SK-N-SH (cell line): ENCODE measurements at regions of chr9 and their contacts with region 1.

Region 1: GRCh38 chr9:133149126-133150107 is 14.3 kb downstream of the GBGT1 start:
- DNase-seq: peak; percentile 98
- H3K4me3 ChIP-seq: peak overlapping the region in 1 of 2 experiments; percentile 81; a peak in 2 of 4 replicates
- H3K27ac ChIP-seq: peak overlapping the region; percentile 35 to 80
- H3K4me1 ChIP-seq: peaks cover 0 to 24% of the 10 kb centered on the region in 2 experiments; a peak in 2 of 4 replicates
- H3K27me3 ChIP-seq: no peaks in the 10 kb centered on the region
- CTCF ChIP-seq: peak; percentile 43
- EP300 ChIP-seq: no peak
- RAD21 ChIP-seq: peak; percentile 41; the same call in 1 of the 2 replicates

Region 2: DNA sequence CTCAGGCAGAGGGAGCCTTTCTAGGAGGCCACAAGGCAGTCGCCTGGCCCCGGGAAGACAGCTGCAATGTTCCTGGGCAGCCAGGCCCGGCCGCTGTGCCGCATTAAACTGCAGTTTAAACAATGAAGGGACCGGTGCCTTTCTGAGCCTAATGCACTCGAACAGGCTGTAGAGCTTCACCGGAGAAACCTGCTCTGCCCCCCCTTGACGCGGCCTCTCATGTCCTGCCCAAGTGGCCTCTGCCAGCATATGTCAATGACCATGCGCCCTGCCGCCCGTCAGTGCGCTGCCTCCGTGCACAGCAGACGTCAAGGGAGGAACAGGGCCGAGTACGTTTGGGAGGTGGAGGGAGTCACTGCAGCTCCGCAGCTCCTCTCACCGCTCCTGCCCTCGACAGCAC is 605.5 kb before region 1 on chr9:
- CTCF ChIA-PET with region 1: no interaction called
- POLR2A ChIA-PET with region 1: no interaction called
- DNase-seq: no peak
- H3K4me3 ChIP-seq: no peak overlapping the region
- H3K27ac ChIP-seq: no peak overlapping the region
- H3K4me1 ChIP-seq: peaks cover 0 to 49% of the 10 kb centered on the region in 2 experiments; a peak in 1 of 4 replicates
- H3K27me3 ChIP-seq: no peaks in the 10 kb centered on the region
- CTCF ChIP-seq: no peak
- EP300 ChIP-seq: no peak
- RAD21 ChIP-seq: no peak

Region 3: DNA sequence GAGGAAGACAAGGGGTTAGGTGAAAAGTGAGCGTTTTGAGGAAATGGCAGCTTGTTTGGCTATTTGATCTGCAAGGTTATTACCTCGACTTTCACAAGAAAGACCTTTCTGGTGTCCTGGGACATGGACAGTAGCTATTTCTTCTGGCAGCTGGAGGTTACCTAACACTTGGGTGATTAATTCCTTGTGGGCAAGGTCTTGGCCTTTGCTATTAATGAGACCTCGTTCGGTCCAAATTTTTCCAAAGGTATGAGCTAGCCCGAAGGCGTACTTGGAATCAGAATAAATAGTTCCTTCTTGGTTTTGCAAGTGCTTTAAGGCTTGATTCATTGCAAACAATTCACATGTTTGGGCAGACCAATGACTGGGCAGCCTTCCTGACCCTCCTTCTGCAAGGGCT is 113.7 kb before region 1 on chr9:
- CTCF ChIA-PET with region 1: interaction called, 216 read pairs
- POLR2A ChIA-PET with region 1: interaction called, 10 read pairs
- DNase-seq: no peak
- H3K4me3 ChIP-seq: no peak overlapping the region
- H3K27ac ChIP-seq: no peak overlapping the region
- H3K4me1 ChIP-seq: peaks cover 8 to 10% of the 10 kb centered on the region in 2 experiments; a peak in 2 of 4 replicates
- H3K27me3 ChIP-seq: no peaks in the 10 kb centered on the region
- CTCF ChIP-seq: no peak
- EP300 ChIP-seq: no peak
- RAD21 ChIP-seq: no peak

Region 4: GRCh38 chr9:133089271-133089671 is 60.1 kb before region 1 on chr9:
- CTCF ChIA-PET with region 1: interaction called, 810 read pairs
- POLR2A ChIA-PET with region 1: no interaction called
- DNase-seq: no peak
- H3K4me3 ChIP-seq: no peak overlapping the region
- H3K27ac ChIP-seq: peak overlapping the region in 1 of 2 experiments; percentile 14; a peak in 1 of 4 replicates
- H3K4me1 ChIP-seq: peaks cover 0 to 36% of the 10 kb centered on the region in 2 experiments; a peak in 2 of 4 replicates
- H3K27me3 ChIP-seq: no peaks in the 10 kb centered on the region
- CTCF ChIP-seq: no peak
- EP300 ChIP-seq: no peak
- RAD21 ChIP-seq: no peak

Region 5: DNA sequence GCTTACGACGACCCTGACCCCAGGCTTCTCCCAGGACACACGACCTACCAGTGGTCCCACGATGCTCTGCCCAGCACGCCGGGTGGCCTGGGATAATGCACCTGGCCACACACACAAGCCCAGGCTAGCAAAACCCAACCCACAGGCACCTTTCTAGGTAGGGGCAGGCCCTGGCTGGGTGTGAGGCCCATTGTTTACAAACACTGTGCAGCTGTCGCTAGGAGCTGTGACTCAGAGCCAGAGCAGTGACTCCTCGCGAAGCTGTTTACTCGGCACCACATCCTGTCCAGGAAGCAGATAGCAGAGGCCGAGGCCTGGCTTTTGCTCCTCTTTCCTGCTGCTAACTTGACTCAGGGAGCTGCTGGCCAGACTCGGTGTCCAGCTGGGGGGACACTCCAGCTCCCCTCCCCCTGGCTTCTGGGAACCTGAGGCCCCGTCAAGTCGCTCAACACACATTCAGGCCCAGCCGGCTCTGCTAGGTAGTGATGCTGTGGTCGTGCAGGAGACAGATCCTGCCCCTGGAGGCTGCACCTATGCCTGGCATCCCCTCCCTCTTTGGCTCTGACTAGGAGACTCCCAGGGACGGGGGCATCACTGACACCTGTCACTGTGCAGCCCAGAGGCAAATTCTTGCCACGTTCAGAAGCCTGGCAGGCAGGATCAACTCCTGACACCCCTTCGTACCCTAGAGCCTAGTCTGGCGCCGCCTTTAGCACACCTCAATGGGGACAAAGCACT is 15.6 kb before region 1 on chr9:
- CTCF ChIA-PET with region 1: interaction called, 163 read pairs
- POLR2A ChIA-PET with region 1: interaction called, 7 read pairs
- DNase-seq: peak; percentile 90
- H3K4me3 ChIP-seq: no peak overlapping the region
- H3K27ac ChIP-seq: peak overlapping the region; percentile 89 to 97
- H3K4me1 ChIP-seq: peaks cover 27 to 64% of the 10 kb centered on the region in 2 experiments; a peak in 3 of 4 replicates
- H3K27me3 ChIP-seq: no peaks in the 10 kb centered on the region
- CTCF ChIP-seq: no peak
- EP300 ChIP-seq: peak; percentile 48 to 81; a peak in 2 of 4 replicates
- RAD21 ChIP-seq: peak; percentile 19; the same call in 1 of the 2 replicates

Region 6: DNA sequence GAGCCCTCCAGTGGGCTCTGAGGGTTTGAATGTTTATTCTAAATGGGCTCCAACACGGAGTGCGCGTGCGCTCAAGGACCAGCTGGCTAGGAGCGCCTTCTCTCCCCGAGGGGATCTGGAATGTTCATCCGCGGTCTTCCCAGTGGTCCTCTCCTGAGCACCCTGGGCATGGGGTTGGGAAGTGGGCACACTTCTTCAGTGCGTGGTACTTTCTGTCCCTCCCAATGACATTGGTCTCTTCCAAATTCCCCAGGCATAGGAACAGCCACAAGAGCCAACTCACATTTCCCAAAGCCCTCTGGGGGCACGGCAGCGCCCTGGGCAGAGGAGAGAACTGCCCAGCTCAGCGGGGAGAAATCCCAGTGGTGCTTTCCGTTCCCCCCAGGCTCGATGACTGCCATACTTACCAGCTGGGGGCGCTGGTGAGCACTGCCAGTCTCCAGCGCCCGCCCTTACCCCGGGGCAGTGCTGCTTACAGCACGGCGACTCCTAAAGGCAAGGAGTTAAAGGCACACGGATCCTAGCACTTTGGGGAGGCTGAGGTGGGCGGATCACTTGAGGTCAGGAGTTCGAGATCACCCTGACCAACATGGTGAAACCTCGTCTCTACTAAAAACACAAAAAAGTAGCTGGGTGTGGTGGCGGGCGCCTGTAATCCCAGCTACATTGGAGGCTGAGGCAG is 89.6 kb after region 1 on chr9:
- CTCF ChIA-PET with region 1: no interaction called
- POLR2A ChIA-PET with region 1: no interaction called
- DNase-seq: peak; percentile 70
- H3K4me3 ChIP-seq: no peak overlapping the region; a peak in 1 of 4 replicates
- H3K27ac ChIP-seq: no peak overlapping the region
- H3K4me1 ChIP-seq: peaks cover 0 to 2% of the 10 kb centered on the region in 2 experiments; a peak in 1 of 4 replicates
- H3K27me3 ChIP-seq: peaks cover 8% of the 10 kb centered on the region; the same call in 1 of the 2 replicates
- CTCF ChIP-seq: peak; percentile 47
- EP300 ChIP-seq: no peak
- RAD21 ChIP-seq: no peak